H1 (cell line): ENCODE measurements at regions of chr1 and their contacts with region 1.

Region 1: DNA sequence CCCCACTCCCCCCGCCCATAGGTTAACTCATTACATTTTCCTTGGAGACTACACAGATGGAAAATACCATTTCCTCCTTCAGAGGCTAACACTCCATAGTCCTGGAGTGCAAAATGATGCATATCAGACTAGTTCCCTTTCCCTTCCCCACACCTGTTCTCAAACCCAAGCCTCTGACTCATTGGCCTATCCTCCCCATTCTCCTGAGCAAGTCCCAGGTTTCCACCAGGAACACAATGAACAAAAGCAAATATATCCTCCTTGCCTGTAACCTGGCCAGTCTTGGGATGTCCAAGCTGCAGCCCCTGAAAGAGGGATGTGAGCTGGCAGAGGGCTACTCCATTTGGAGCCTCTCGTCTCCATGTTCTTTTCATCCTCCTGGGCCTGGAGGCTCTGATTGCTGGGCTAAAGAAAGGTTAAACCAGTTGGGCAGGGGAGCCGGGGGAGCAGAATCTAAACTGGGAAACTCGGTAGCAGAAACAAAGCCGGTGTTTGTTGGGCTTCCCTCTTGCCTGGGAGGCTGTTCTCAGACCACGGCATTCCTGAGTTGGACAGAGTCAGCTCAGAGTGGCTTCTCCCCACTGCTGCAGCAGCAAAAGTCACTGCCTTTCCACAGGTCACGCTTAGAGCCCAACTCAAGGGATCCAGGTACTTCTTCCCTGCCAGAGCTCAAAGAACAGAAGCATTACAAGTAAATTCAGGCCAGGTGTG is 13.9 kb downstream of the SSR2 start:
- DNase-seq: no peak
- H3K4me3 ChIP-seq: no peak overlapping the region
- H3K27ac ChIP-seq: no peak overlapping the region
- H3K4me1 ChIP-seq: peaks cover 0 to 4% (median 1%) of the 10 kb centered on the region in 4 experiments; a peak in 3 of 7 replicates
- H3K27me3 ChIP-seq: no peaks in the 10 kb centered on the region
- CTCF ChIP-seq: no peak
- EP300 ChIP-seq: no peak
- POLR2A ChIP-seq: no peak
- RAD21 ChIP-seq: no peak

Region 2: DNA sequence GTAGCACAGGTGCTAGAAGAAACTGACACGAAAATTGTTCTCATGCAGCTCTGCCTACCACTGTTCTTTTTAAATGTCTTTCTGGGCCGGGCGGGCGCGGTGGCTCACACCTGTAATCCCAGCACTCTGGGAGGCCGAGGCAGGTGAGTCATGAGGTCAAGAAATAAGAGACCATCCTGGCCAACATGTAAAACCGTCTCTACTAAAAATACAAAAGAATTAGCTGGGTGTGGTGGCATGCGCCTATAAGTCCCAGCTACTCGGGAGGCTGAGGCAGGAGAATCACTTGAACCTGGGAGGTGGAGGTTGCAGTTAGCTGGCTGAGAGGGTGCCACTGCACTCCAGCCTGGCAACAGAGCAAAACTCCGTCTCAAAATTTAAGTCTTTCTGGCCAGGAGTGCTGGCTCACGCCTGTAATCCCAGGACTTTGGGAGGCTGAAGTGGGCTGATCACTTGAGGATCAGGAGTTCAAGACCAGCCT is 94.7 kb before region 1 on chr1:
- CTCF ChIA-PET with region 1: no interaction called
- POLR2A ChIA-PET with region 1: no interaction called
- DNase-seq: no peak
- H3K4me3 ChIP-seq: no peak overlapping the region
- H3K27ac ChIP-seq: no peak overlapping the region
- H3K4me1 ChIP-seq: peaks cover 0 to 3% (median 1%) of the 10 kb centered on the region in 4 experiments; a peak in 2 of 7 replicates
- H3K27me3 ChIP-seq: no peaks in the 10 kb centered on the region
- CTCF ChIP-seq: no peak
- EP300 ChIP-seq: no peak
- POLR2A ChIP-seq: no peak
- RAD21 ChIP-seq: no peak

Region 3: DNA sequence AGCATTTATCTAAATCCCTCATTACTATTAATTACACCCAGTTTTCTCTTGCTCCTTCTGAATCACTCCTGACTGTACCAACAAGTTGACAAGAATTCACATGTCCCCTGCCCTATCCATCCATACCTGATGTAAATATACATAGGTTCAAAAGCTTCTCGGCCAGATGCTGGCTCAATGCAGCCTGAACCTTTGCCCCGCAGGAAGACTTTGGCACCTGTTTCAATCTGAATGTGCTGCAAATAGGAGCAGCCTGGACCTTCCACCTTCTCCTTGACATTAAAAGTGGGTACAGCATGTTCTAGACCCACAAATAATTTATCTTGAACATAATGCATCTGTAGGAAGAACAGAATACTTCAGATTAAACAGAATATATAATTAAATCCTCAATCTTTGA is 81.3 kb before region 1 on chr1:
- CTCF ChIA-PET with region 1: no interaction called
- POLR2A ChIA-PET with region 1: no interaction called
- DNase-seq: no peak
- H3K4me3 ChIP-seq: no peak overlapping the region
- H3K27ac ChIP-seq: no peak overlapping the region
- H3K4me1 ChIP-seq: no peaks in the 10 kb centered on the region
- H3K27me3 ChIP-seq: no peaks in the 10 kb centered on the region
- CTCF ChIP-seq: no peak
- EP300 ChIP-seq: no peak
- POLR2A ChIP-seq: no peak
- RAD21 ChIP-seq: no peak

Region 4: GRCh38 chr1:155996166-155996565 is 10.7 kb before region 1 on chr1:
- CTCF ChIA-PET with region 1: interaction called, 17 read pairs
- POLR2A ChIA-PET with region 1: interaction called, 3 read pairs
- DNase-seq: no peak
- H3K4me3 ChIP-seq: no peak overlapping the region
- H3K27ac ChIP-seq: no peak overlapping the region
- H3K4me1 ChIP-seq: no peaks in the 10 kb centered on the region
- H3K27me3 ChIP-seq: no peaks in the 10 kb centered on the region
- CTCF ChIP-seq: no peak
- EP300 ChIP-seq: no peak
- POLR2A ChIP-seq: no peak
- RAD21 ChIP-seq: no peak